ENCODE measurements at regions of chr19 and their contacts with region 1.

Region 1: DNA sequence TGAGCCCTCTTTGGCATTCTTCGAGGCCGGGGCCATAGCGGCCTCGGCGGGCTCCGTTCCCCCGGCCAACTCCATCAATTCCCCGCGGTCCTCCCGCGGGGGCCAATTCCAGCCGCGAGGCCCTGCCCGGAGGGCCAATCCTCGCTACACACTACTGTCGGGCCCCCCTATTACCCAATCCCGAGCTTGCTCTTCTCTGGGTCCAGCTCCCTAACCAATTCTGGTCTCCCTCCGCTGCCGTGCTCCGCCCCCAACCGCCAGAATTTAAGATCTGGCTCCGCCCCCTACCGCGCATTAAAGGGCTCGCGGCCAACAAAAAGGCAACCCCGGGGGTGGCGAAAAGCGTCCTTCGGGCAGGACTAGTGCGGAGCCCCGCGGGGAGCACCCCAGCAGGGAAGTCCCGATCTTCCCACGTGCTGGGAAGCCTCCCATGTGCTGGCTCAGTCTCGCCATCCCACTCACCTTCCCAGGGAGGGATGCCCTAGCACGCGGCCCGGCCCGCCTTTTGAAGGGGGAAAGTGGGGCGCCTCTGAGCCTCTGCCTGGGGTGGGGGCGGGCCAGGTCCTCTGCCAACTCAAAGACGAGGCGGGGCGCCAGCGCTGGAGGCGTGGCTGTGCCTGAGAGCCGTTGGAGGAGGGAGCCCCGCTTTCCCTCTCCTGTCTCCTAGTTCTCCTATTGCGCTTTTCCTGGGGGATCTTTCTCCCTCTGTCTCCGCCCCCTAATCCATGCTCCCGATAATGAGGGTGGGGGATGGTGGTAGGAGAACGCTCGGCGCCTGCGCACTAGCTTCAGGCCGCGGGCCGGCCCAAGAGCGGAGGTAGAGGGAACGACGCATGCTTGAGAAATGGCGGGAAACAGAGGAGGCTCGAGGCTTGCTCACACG is 3.5 kb downstream of the LIPE start:
- DNase-seq: peak; percentile 96
- H3K4me3 Mint-ChIP-seq: peak overlapping the region; percentile 93
- H3K27ac Mint-ChIP-seq: peak overlapping the region; percentile 86
- H3K4me1 Mint-ChIP-seq: peaks cover 33% of the 10 kb centered on the region
- H3K27me3 Mint-ChIP-seq: no peaks in the 10 kb centered on the region

Region 2: GRCh38 chr19:42108527-42109389 is 314.9 kb before region 1 on chr19:
- CTCF ChIA-PET with region 1: no interaction called
- intact Hi-C with region 1: loop called (anchors 5 kb)
- DNase-seq: peak; percentile 97
- H3K4me3 Mint-ChIP-seq: no peak overlapping the region
- H3K27ac Mint-ChIP-seq: peak overlapping the region; percentile 44
- H3K4me1 Mint-ChIP-seq: peaks cover 55% of the 10 kb centered on the region
- H3K27me3 Mint-ChIP-seq: no peaks in the 10 kb centered on the region

Region 3: GRCh38 chr19:42283143-42284065 is 140.3 kb before region 1 on chr19:
- CTCF ChIA-PET with region 1: interaction called, 3 read pairs
- intact Hi-C with region 1: loop called (anchors 2 kb)
- DNase-seq: peak; percentile 96
- H3K4me3 Mint-ChIP-seq: peak overlapping the region; percentile 7
- H3K27ac Mint-ChIP-seq: no peak overlapping the region
- H3K4me1 Mint-ChIP-seq: peaks cover 45% of the 10 kb centered on the region
- H3K27me3 Mint-ChIP-seq: no peaks in the 10 kb centered on the region

Region 4: DNA sequence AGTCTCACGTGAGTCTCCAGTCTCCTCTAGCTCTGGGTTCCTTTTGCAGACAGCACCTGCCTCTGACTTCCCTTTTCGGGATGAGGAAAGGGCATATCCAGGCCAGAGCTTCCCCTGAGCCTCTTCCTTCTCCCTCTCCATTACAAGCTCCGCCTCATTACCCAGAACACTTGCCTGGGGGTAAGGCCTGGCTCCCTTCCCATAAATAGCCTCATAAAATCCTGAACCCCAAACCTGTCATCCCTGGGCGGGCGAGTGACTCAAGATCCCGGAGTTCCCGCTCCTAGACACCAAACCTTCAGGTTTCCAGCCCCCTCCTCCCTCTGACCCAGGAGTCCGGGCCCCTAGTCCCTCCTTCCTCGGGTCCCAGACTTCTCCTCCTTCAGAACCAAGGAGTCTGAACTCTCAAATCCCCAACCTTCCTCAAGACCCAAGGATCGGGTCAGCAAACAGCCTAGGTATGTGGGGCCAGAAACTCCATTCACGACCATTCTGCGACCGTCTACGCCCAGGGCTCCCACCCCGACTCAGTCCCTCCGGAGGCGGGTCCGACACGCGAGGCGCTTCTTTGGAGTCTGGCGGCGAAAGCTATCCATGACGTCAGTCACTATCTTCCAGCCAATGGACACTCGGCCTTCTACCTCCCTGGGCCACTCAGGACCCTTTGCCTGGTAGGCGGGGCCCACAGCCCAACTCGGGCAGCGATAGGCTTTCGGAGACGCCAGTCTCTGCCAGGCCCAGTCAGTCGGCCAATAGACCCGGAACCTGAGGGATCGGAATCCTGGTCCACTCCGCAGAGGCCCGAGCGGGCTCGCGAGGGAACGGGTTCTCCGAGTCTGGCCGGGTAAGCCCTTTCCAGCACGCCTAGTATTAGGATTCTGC is 27.1 kb before region 1 on chr19:
- CTCF ChIA-PET with region 1: interaction called, 6 read pairs
- intact Hi-C with region 1: loop called (anchors 1 kb)
- DNase-seq: peak; percentile 98
- H3K4me3 Mint-ChIP-seq: peak overlapping the region; percentile 89
- H3K27ac Mint-ChIP-seq: peak overlapping the region; percentile 88
- H3K4me1 Mint-ChIP-seq: peaks cover 32% of the 10 kb centered on the region
- H3K27me3 Mint-ChIP-seq: no peaks in the 10 kb centered on the region

Region 5: GRCh38 chr19:42455621-42456081 is 31.9 kb after region 1 on chr19:
- CTCF ChIA-PET with region 1: no interaction called
- intact Hi-C with region 1: loop called (anchors 1 kb)
- DNase-seq: no peak
- H3K4me3 Mint-ChIP-seq: no peak overlapping the region
- H3K27ac Mint-ChIP-seq: no peak overlapping the region
- H3K4me1 Mint-ChIP-seq: no peaks in the 10 kb centered on the region
- H3K27me3 Mint-ChIP-seq: no peaks in the 10 kb centered on the region

Region 6: DNA sequence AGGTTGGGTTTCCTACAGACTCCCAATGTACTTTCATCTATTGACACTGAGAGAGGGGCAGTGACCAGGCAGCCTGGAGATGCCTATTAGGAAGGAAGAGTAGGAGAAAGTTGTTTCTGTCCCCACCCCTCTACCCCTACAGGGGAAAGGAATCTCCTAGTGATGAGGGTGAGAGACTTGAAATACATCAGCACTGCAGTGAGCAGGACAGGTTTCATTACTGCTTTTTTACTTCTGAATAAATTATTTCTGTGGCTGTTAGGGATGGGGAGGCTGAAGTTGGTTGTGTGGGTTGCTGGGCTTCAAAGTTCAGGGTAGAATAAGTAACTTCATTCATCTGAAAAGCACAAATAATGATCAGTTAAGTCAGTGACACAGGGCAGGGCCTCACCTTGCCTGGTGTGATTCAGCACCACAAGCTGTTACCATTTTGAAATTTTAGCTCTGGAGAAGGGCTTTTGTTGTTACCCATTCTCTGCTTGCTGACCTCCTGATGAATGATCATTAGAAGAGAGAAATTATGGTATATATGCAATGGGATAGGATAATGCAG is 85.3 kb after region 1 on chr19:
- CTCF ChIA-PET with region 1: no interaction called
- intact Hi-C with region 1: no loop called
- DNase-seq: no peak
- H3K4me3 Mint-ChIP-seq: no peak overlapping the region
- H3K27ac Mint-ChIP-seq: no peak overlapping the region
- H3K4me1 Mint-ChIP-seq: peaks cover 21% of the 10 kb centered on the region
- H3K27me3 Mint-ChIP-seq: no peaks in the 10 kb centered on the region